ENCODE measurements at regions of chr22 and their contacts with region 1.

Region 1: GRCh38 chr22:19085233-19085718 is 36.9 kb downstream of the DGCR2 start:
- DNase-seq: peak; percentile 61
- H3K4me3 ChIP-seq: peak overlapping the region; percentile 57
- H3K27ac ChIP-seq: peak overlapping the region; percentile 89
- H3K4me1 ChIP-seq: peaks cover 24% of the 10 kb centered on the region
- CTCF ChIP-seq: peak; percentile 79

Region 2: GRCh38 chr22:19035474-19036228 is 49.6 kb before region 1 on chr22:
- CTCF ChIA-PET with region 1: no interaction called
- POLR2A ChIA-PET with region 1: no interaction called
- intact Hi-C with region 1: loop called (anchors 2 kb)
- DNase-seq: peak; percentile 18
- H3K4me3 ChIP-seq: no peak overlapping the region
- H3K27ac ChIP-seq: no peak overlapping the region
- H3K4me1 ChIP-seq: no peaks in the 10 kb centered on the region
- CTCF ChIP-seq: 0 out of 2 replicates have a peak, but pooled peaks have one; percentile 33

Region 3: DNA sequence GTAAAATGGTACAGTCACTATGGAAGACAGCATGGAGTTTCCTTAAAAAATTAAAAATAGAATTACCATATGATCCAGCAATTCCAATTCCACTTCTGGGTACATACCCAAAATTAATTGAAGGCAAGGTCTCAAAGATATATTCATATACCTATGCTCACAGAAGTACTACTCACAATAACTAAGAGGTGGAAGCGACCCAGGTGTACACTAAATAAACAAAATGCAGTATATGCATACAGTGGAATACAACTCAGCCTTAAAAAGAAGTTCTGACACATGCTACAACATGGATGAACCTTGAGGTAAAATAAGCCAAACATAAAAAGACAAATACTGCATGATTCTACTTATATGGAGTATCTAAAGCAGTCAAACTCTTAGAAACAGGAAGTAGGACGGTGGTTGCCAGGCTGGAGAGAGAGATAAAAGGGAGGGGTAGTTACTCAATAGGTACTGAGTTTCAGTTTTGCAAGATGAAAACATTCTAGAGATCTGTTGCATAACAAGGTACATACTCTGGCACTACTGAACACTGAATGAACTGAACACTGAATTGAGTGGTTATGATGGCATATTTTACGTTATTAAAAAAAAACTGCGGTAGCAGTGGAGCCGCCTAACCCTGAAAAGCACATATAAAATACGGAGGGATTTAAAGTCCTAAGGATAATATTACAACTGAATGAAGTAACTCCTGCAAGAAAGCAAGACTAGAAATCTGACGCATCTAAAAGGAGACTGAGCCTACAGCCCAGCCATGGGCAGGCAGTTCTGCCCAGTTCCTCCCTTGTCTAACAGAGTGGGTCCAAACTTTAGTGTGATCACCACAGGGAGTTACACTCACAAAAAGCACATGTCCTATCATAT is 24.2 kb after region 1 on chr22:
- CTCF ChIA-PET with region 1: no interaction called
- POLR2A ChIA-PET with region 1: no interaction called
- intact Hi-C with region 1: no loop called
- DNase-seq: peak; percentile 75
- H3K4me3 ChIP-seq: peak overlapping the region; percentile 40
- H3K27ac ChIP-seq: peak overlapping the region; percentile 19
- H3K4me1 ChIP-seq: peaks cover 28% of the 10 kb centered on the region
- CTCF ChIP-seq: no peak

Region 4: GRCh38 chr22:19143967-19144400 is 58.7 kb after region 1 on chr22:
- CTCF ChIA-PET with region 1: no interaction called
- POLR2A ChIA-PET with region 1: no interaction called
- intact Hi-C with region 1: loop called (anchors 1 kb)
- DNase-seq: peak; percentile 17
- H3K4me3 ChIP-seq: peak overlapping the region; percentile 84
- H3K27ac ChIP-seq: no peak overlapping the region
- H3K4me1 ChIP-seq: peaks cover 9% of the 10 kb centered on the region
- CTCF ChIP-seq: no peak

Measured in OCI-LY7 (cell line).